ENCODE measurements at regions of chr18 and their contacts with region 1.

Region 1: GRCh38 chr18:9575558-9575957 is 38.8 kb downstream of the PPP4R1 start:
- DNase-seq: no peak
- ATAC-seq: peak; percentile 96

Region 2: DNA sequence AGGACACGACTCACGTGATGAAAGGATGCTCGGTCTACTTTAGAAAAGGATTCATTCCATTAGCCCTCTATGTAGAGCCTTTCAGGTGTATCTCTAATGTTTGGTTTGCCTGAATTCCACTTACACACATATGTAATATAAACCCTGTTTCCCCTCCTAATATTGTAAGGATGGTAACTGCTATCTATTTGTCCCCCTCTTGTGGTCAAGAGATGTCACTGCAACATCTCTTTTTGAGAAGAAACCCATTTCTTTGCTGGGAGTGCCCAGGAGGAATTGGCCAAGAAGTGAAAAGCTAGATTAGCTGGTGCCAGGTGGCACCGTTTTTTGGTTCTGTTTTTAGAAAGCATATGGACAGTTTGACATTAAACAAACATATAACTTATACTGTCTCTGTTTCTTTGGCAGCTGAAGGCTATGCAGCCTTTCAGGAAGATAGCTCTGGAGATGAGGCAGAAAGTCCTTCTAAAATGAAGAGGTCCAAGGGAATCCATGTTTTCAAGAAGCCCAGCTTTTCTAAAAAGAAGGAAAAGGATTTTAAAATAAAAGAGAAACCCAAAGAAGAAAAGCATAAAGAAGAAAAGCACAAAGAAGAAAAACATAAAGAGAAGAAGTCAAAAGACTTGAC is 59.0 kb before region 1 on chr18:
- intact Hi-C with region 1: no loop called
- DNase-seq: no peak
- ATAC-seq: no peak

Region 3: DNA sequence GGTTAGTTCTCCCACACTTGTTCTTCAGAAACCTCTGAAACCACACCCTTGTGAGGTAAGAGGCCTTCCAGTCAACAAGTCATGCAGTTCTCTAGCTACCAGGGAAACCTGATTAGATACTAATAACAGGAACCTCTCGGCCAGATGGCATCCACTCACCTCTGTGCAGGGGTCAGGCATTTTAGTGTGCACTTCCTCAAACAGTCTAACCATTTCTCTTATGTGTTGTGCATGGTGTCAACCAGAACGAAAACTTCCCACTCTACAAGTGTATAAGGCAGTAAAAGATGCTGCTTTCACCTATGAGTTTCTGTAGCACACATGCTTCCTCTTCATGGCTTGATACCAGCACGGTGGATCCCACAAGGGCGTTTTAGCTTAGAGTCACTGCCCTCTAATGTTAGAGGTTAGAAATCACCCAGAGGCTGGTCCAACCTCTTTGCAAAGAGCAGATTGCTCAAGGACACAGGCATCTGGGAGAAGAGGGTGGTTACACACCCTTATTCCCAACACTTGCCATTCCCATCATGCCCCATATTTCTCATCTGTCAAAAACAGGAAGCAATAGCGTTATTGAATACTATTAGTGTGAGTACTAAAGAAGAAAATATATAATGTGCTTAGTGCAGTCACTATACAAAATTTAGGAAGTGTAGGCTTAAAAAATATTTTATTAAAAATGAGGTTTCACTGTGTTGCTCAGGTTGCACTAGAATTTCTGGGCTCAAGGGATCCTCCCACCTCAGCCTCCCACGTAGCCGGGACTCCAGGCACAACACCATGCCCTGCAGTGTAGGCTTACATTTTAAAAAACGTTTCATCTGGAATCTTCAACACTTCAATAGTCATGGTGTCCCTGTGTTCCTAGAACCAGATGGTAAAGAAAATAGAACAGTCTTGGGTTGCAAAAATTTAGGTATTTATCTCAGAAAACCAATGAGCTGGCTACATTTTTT is 98.0 kb after region 1 on chr18:
- intact Hi-C with region 1: loop called (anchors 5 kb)
- DNase-seq: no peak
- ATAC-seq: peak; percentile 91

Region 4: DNA sequence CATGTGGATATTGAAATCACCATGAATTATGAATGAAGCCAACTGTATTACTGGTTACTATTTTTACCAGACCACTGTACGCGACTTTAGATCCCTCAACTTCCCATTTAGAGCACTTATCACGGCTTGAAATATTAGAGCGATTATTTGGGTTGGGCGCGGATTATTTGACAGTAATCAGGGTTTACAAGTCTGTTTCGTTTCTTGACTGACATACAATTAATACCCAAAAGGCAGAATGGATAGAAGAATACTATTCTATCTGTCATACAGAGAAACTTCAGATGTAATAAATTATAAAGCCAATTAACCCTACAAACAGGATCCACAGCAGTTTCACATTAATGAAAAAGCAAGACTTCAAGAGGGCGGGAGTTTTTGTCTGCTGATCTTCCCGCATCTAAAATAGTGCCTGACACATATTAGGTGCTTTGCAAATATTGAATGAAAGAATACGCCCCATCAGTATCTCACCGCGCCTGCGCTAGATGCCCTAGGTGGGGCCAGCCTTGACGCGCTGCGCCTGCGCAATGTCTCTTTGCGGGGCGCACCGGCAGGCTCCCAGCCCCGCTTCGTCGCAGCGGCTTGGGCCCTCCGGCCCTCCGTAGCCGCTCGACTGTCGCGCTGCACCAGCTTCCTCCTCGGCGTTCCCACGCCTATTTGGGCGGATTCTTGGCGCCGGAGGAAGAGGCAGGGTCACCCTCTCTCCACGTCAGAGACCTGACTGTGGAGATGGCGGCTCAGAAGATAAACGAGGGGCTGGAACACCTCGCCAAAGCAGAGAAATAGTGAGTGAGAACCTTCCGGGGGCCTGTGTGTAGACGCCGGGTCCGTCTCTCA is 950.0 kb after region 1 on chr18 and contains the start of gene NAPG:
- intact Hi-C with region 1: loop called (anchors 10 kb)
- DNase-seq: peak; percentile 96
- ATAC-seq: peak; percentile 96
- total RNA-seq, gene NAPG: 30.8 TPM

Measured in Right ventricle myocardium inferior (tissue), 1 donor.